Caco-2 (cell line): ENCODE measurements at regions of chr7 and their contacts with region 1.

Region 1: DNA sequence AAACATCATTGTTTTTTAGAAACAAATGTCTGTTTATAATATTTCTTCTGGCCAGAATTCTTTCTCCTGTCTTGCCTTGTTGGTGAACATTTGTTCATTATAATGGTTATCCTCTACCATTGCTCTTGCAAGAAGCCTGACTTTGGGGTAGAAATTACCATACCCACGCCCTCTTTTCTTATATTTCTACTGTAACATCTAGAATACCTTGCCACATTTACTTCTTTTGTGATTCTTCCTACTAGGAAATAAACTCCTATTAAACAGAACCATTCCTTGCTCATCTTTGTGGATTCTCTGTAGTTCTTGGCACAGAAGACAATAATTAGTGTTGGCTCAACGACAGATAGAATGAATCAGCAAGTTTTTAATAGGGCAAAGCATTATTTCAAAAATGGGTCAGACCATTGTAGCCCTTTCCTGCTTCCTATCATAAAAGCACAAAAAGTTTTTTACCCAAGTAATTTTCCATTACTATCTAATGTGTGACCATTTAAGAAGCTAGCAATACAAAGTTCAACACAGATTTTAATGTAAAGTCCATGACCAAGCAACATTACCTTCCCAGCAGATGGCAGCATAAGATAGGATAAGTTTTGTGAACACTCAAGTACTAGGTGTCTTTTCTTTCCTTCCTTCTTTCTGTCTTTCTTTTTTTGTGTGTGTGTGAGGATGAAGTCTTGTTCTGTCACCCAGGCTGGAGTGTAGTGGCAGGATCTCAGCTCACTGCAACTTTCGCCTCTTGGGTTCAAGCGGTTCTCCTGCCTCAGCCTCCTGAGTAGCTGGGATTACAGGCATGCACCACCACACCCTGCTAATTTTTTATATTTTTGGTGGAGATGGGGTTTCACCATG is 270.4 kb downstream of the HGF start:
- DNase-seq: peak in 1 of 2 experiments; percentile 61
- H3K4me3 ChIP-seq: no peak overlapping the region
- H3K4me3 Mint-ChIP-seq: no peak overlapping the region
- H3K27ac Mint-ChIP-seq: no peak overlapping the region
- H3K4me1 ChIP-seq: no peaks in the 10 kb centered on the region
- H3K4me1 Mint-ChIP-seq: peaks cover 9% of the 10 kb centered on the region
- H3K27me3 ChIP-seq: no peaks in the 10 kb centered on the region
- H3K27me3 Mint-ChIP-seq: peaks cover 11% of the 10 kb centered on the region
- CTCF ChIP-seq: peak; percentile 43 to 44

Region 2: GRCh38 chr7:81232084-81232799 is 267.2 kb before region 1 on chr7:
- CTCF ChIA-PET with region 1: no interaction called
- POLR2A ChIA-PET with region 1: no interaction called
- intact Hi-C with region 1: no loop called
- DNase-seq: no peak
- H3K4me3 ChIP-seq: no peak overlapping the region
- H3K4me3 Mint-ChIP-seq: no peak overlapping the region
- H3K27ac Mint-ChIP-seq: no peak overlapping the region
- H3K4me1 ChIP-seq: no peaks in the 10 kb centered on the region
- H3K4me1 Mint-ChIP-seq: no peaks in the 10 kb centered on the region
- H3K27me3 ChIP-seq: no peaks in the 10 kb centered on the region
- H3K27me3 Mint-ChIP-seq: no peaks in the 10 kb centered on the region
- CTCF ChIP-seq: no peak

Region 3: GRCh38 chr7:81715984-81716588 is 216.6 kb after region 1 on chr7:
- CTCF ChIA-PET with region 1: no interaction called
- POLR2A ChIA-PET with region 1: no interaction called
- intact Hi-C with region 1: loop called (anchors 1 kb)
- DNase-seq: peak; percentile 27 to 28
- H3K4me3 ChIP-seq: no peak overlapping the region
- H3K4me3 Mint-ChIP-seq: no peak overlapping the region
- H3K27ac Mint-ChIP-seq: no peak overlapping the region
- H3K4me1 ChIP-seq: no peaks in the 10 kb centered on the region
- H3K4me1 Mint-ChIP-seq: no peaks in the 10 kb centered on the region
- H3K27me3 ChIP-seq: no peaks in the 10 kb centered on the region
- H3K27me3 Mint-ChIP-seq: no peaks in the 10 kb centered on the region
- CTCF ChIP-seq: peak; percentile 38 to 40

Region 4: GRCh38 chr7:81776948-81777630 is 277.6 kb after region 1 on chr7:
- CTCF ChIA-PET with region 1: no interaction called
- POLR2A ChIA-PET with region 1: no interaction called
- intact Hi-C with region 1: loop called (anchors 1 kb)
- DNase-seq: peak in 1 of 2 experiments; percentile 7
- H3K4me3 ChIP-seq: no peak overlapping the region
- H3K4me3 Mint-ChIP-seq: no peak overlapping the region
- H3K27ac Mint-ChIP-seq: no peak overlapping the region
- H3K4me1 ChIP-seq: no peaks in the 10 kb centered on the region
- H3K4me1 Mint-ChIP-seq: no peaks in the 10 kb centered on the region
- H3K27me3 ChIP-seq: no peaks in the 10 kb centered on the region
- H3K27me3 Mint-ChIP-seq: peaks cover 6% of the 10 kb centered on the region
- CTCF ChIP-seq: peak; percentile 28 to 38

Region 5: DNA sequence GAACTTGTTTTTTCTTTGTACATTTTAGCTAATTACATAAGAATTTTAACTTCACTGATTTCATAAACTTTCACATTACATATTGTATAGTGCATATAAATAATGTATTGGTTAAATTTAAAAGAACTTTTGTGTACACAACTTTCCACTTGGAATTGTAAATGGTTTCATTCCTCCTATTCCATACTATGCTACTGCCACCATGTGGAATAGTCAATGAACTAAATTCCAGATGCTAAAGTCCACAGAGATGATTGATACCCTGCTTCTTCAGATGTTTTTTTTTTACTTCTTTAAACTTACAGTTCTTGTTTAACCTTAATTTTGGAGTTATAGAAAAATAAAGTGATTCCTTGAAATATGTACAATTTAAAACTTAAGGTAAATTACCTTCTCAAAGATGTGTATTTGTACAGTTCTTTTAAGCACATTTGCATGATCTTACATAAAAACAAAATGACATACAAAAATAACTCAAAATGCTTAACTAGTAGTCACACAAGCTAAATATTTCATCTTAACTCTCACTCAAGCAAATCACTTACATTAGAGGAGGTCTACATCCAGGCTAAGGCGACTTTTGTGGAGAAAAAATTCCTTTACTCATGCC is 518.0 kb after region 1 on chr7:
- CTCF ChIA-PET with region 1: interaction called, 3 read pairs
- POLR2A ChIA-PET with region 1: no interaction called
- intact Hi-C with region 1: loop called (anchors 1 kb)
- DNase-seq: peak in 1 of 2 experiments; percentile 17
- H3K4me3 ChIP-seq: no peak overlapping the region
- H3K4me3 Mint-ChIP-seq: no peak overlapping the region
- H3K27ac Mint-ChIP-seq: no peak overlapping the region
- H3K4me1 ChIP-seq: no peaks in the 10 kb centered on the region
- H3K4me1 Mint-ChIP-seq: no peaks in the 10 kb centered on the region
- H3K27me3 ChIP-seq: no peaks in the 10 kb centered on the region
- H3K27me3 Mint-ChIP-seq: no peaks in the 10 kb centered on the region
- CTCF ChIP-seq: peak; percentile 42 to 49

Region 6: GRCh38 chr7:82572195-82572880 is 1072.8 kb after region 1 on chr7:
- CTCF ChIA-PET with region 1: no interaction called
- POLR2A ChIA-PET with region 1: no interaction called
- intact Hi-C with region 1: loop called (anchors 10 kb)
- DNase-seq: peak; percentile 80 to 83
- H3K4me3 ChIP-seq: no peak overlapping the region
- H3K4me3 Mint-ChIP-seq: no peak overlapping the region
- H3K27ac Mint-ChIP-seq: no peak overlapping the region
- H3K4me1 ChIP-seq: no peaks in the 10 kb centered on the region
- H3K4me1 Mint-ChIP-seq: no peaks in the 10 kb centered on the region
- H3K27me3 ChIP-seq: no peaks in the 10 kb centered on the region
- H3K27me3 Mint-ChIP-seq: peaks cover 17% of the 10 kb centered on the region
- CTCF ChIP-seq: peak; percentile 85 to 91